ENCODE measurements at regions of chr7 and their contacts with region 1.

Region 1: GRCh38 chr7:158740013-158740656 is 35.5 kb upstream of the NCAPG2 start:
- DNase-seq: peak in 1 of 9 experiments; percentile 41
- ATAC-seq: no peak
- H3K4me3 ChIP-seq: no peak overlapping the region
- H3K4me3 Mint-ChIP-seq: no peak overlapping the region
- H3K27ac ChIP-seq: no peak overlapping the region
- H3K27ac Mint-ChIP-seq: peak overlapping the region; percentile 23
- H3K4me1 ChIP-seq: no peaks in the 10 kb centered on the region
- H3K4me1 Mint-ChIP-seq: no peaks in the 10 kb centered on the region
- H3K27me3 ChIP-seq: no peaks in the 10 kb centered on the region
- H3K27me3 Mint-ChIP-seq: no peaks in the 10 kb centered on the region
- CTCF ChIP-seq: no peak

Region 2: GRCh38 chr7:156984174-156984891 is 1755.8 kb before region 1 on chr7:
- CTCF ChIA-PET with region 1: no interaction called
- POLR2A ChIA-PET with region 1: no interaction called
- intact Hi-C with region 1: loop called in 1 of 2 experiments (anchors 10 kb)
- DNase-seq: no peak
- ATAC-seq: no peak
- H3K4me3 ChIP-seq: no peak overlapping the region
- H3K4me3 Mint-ChIP-seq: no peak overlapping the region
- H3K27ac ChIP-seq: no peak overlapping the region
- H3K27ac Mint-ChIP-seq: no peak overlapping the region
- H3K4me1 ChIP-seq: no peaks in the 10 kb centered on the region
- H3K4me1 Mint-ChIP-seq: no peaks in the 10 kb centered on the region
- H3K27me3 ChIP-seq: no peaks in the 10 kb centered on the region
- H3K27me3 Mint-ChIP-seq: peaks cover 4% of the 10 kb centered on the region
- CTCF ChIP-seq: no peak

Region 3: GRCh38 chr7:158541346-158542010 is 198.7 kb before region 1 on chr7:
- CTCF ChIA-PET with region 1: no interaction called
- POLR2A ChIA-PET with region 1: no interaction called
- intact Hi-C with region 1: no loop called
- DNase-seq: peak in 5 of 9 experiments; percentile 7 to 46 (median 13)
- ATAC-seq: no peak
- H3K4me3 ChIP-seq: no peak overlapping the region
- H3K4me3 Mint-ChIP-seq: no peak overlapping the region
- H3K27ac ChIP-seq: no peak overlapping the region
- H3K27ac Mint-ChIP-seq: no peak overlapping the region
- H3K4me1 ChIP-seq: no peaks in the 10 kb centered on the region
- H3K4me1 Mint-ChIP-seq: peaks cover 8% of the 10 kb centered on the region
- H3K27me3 ChIP-seq: no peaks in the 10 kb centered on the region
- H3K27me3 Mint-ChIP-seq: no peaks in the 10 kb centered on the region
- CTCF ChIP-seq: no peak

Region 4: DNA sequence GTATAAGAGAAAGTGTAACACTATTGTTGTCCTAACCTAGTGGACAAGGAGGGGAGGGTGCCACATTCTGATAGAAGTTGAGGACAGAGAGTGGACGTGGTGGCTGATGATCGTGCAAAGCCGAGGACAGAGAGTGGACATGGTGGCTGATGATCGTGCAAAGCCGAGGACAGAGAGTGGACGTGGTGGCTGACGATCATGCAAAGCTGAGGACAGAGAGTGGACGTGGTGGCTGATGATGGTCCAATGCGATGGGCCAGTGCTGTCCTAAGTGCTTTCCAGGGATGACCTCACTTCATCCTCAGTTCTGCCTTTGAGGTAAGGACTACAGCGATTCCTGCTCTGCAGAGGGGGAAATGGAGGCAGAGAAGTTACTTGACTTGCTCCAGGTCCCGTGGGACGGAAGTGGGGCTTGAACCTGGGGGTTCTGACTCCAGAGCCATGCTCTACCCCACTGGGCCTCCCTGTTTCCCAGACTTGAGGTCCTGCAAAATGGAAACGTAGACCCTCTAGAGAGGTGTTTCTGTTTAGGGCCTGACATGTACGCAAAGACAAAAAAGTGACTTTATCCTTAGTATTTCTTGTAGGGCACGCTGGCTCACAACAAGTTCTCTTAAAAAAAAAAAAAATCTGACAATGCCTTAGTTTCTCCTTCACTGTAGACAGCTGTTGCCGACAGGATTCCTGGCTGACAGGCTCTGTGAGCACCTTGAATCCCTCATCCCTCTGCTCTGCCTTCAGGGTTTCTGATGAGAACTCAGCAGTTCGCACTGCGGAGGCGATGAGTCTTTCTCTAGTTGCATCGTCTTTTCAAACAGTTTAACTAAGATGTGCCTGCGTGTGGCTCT is 15.3 kb before region 1 on chr7:
- CTCF ChIA-PET with region 1: no interaction called
- POLR2A ChIA-PET with region 1: no interaction called
- intact Hi-C with region 1: no loop called
- DNase-seq: no peak
- ATAC-seq: no peak
- H3K4me3 ChIP-seq: no peak overlapping the region
- H3K4me3 Mint-ChIP-seq: no peak overlapping the region
- H3K27ac ChIP-seq: no peak overlapping the region
- H3K27ac Mint-ChIP-seq: no peak overlapping the region
- H3K4me1 ChIP-seq: no peaks in the 10 kb centered on the region
- H3K4me1 Mint-ChIP-seq: no peaks in the 10 kb centered on the region
- H3K27me3 ChIP-seq: no peaks in the 10 kb centered on the region
- H3K27me3 Mint-ChIP-seq: no peaks in the 10 kb centered on the region
- CTCF ChIP-seq: no peak